RWPE1 (cell line): ENCODE measurements at regions of chr11 and their contacts with region 1.

Region 1: DNA sequence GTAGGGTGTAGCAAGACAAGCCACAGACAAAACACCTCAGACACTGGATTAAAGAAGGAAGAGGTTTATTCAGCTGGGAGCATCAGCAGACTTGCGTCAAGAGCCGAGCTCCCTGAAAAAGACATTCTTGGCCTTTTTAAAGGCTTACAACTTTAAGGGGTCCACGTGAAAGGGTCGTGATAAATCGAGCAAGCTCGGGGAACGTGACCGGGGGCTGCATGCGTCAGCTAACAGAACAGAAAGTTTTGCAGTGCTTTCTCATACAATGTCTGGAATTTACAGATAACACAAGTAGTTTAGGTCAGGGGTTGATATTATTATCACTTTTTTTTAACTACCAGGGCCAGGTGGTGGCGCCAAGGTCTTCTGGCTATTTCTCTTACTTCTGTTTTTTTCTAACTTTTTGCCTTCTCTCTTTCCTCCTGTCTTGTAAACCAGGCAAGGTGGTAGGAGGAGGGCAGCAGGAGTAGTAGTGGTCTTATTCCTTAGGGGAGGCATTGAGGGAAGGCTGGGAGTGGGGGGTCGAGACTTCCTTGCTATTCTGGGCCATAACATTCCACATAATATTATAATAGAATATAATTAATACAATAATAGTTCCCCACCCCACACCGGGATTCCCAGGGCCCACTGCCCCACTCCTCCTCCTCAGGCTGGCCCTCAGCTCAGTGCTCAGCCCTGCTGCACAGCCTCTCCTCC is 587 bp upstream of the ALDH3B1 start:
- DNase-seq: no peak
- H3K27ac ChIP-seq: peak overlapping the region; percentile 99
- CTCF ChIP-seq: peak; percentile 56

Region 2: DNA sequence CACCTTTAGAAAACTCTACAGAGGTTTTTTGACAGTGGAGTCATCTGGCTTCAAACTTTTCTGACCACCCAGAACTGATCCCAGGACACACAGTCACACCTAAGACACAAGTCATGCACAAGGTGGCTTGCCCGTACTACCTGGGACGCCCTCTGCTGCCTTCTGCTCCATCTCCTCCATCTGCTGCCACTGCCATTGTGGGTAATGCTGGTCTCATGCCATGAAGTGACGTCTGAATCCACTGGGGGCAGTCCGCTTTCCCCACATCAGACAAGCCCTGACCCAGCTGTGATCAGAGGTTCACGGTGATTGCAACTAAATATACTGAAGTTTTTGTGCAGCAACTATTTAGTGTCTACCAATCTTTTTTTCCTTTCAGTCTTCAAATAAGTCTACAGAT is 15.5 kb after region 1 on chr11:
- CTCF ChIA-PET with region 1: interaction called, 15 read pairs
- POLR2A ChIA-PET with region 1: interaction called, 4 read pairs
- DNase-seq: no peak
- H3K27ac ChIP-seq: peak overlapping the region; percentile 82
- CTCF ChIP-seq: no peak

Region 3: DNA sequence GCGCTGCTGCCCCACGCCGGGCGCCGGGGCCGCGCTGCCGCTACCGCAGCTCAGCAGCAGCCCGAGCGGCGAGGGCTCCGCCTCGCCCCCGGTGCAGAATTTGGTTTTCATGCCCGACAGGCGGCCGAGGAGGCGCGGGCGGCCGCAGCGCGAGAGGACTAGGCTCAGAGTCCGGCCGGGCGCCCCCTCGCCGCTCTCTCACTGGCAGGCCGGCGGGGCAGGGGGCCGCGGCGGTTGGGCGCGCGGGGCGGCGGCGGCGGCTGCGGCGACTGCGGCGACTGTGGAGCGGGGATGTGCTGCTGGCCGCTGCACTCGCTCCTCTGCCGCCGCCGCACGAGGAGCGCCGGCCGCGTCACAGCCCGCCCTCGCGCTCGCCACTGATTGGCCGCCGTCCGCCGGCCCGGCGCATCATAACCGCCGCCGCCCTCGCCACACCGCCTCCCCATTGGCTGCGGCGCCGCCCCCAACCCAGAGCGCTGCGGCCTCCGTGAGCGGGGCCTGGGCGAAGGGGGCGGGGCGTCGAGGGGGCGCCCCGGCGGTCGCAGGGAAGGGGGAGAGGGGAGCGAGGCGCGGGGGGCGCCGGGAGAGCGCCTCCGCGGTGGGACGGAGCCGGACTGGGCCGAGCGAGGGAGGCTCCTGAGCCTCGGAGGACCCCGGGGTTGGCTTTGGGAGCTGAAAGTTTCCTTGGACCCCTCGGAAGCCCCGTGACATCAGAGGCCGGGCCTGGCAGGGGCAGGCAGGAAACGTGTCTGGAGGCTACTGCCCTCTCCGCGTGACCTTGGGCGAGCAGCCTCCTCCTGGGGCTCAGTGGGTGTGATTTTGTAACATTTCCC is 111.7 kb after region 1 on chr11 and contains the start of gene CHKA:
- CTCF ChIA-PET with region 1: no interaction called
- POLR2A ChIA-PET with region 1: no interaction called
- DNase-seq: peak; percentile 90
- H3K27ac ChIP-seq: peak within 1 kb of the TSS; percentile 81
- CTCF ChIP-seq: no peak

Region 4: DNA sequence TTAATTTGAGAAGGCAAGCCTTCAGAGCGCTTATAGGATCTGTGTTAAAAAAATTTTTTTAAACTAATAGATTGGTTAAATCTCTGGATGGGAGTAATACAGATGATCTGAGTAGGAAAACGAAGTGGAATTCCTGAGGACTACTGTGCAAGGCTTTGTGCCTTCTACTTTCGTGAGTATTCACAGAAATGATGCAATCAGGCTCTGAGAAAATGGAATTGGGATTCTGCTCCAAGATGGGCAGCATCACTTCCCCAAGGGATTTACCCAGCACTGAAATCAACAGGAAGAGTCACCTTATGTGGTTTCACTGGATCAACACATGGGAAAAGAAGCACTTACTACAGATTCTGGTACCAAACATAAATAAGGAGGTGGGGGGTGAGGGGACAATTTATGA is 191.1 kb after region 1 on chr11:
- CTCF ChIA-PET with region 1: no interaction called
- POLR2A ChIA-PET with region 1: no interaction called
- DNase-seq: no peak
- H3K27ac ChIP-seq: no peak overlapping the region
- CTCF ChIP-seq: no peak